Activated B cell treated with CpG ODN at 0.5 μM for 24 hours (primary cell): ENCODE measurements at regions of chr5 and their contacts with region 1.

Region 1: GRCh38 chr5:18720002-18720401 is 1085.7 kb downstream of the TAF11L14 start:
- DNase-seq: no peak
- ATAC-seq: no peak
- H3K4me3 Mint-ChIP-seq: no peak overlapping the region
- H3K27ac Mint-ChIP-seq: no peak overlapping the region
- H3K4me1 Mint-ChIP-seq: peaks cover 21% of the 10 kb centered on the region
- H3K27me3 Mint-ChIP-seq: no peaks in the 10 kb centered on the region
- CTCF ChIP-seq: no peak

Region 2: DNA sequence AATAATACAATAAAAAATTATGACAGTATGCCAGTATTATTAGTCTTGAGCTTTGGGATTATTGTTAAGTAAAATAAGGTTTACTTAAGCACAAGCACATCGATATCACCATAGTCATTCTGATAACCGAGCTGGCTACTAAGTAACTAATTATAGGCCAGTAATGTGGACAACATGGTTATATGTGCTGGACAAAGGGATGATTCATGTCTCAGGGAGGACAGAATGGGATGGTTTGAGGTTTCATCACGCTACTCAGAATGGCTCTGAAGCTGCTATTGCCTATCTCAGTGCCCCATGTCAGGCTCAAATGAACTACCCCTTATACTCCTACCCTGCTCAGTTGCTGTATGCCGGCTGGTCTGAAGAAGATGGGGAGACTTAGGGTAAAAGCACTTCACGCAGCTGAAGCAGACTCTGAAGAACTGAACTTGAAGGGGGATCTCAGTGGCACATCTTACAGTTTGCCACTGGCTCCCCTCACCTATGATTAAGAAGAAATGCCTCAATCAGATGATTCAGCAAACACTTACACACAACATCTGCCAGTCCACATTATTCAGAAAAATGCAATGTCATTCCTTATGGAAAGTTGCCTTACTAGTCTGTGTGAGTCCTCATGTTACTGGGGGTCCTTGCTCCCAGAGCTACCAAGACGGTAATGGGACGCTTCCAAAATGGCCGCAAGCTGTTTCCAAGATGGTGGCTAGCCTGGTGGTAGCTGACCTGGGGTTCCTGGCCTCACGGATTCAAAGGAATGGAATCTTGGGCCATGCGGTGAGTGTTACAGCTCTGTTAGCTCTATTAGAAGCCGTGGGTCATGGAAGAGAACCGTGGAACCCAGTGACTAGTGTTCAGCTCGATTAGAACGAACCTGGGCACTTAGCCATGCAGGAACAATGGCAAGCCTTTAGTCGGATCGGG is 12.8 kb after region 1 on chr5:
- CTCF ChIA-PET with region 1: no interaction called
- POLR2A ChIA-PET with region 1: no interaction called
- intact Hi-C with region 1: loop called (anchors 1 kb)
- DNase-seq: no peak
- ATAC-seq: no peak
- H3K4me3 Mint-ChIP-seq: no peak overlapping the region
- H3K27ac Mint-ChIP-seq: no peak overlapping the region
- H3K4me1 Mint-ChIP-seq: peaks cover 5% of the 10 kb centered on the region
- H3K27me3 Mint-ChIP-seq: no peaks in the 10 kb centered on the region
- CTCF ChIP-seq: no peak